GM12878 (cell line): ENCODE measurements at regions of chr1 and their contacts with region 1.

Region 1: GRCh38 chr1:212928323-212929291 is 21.7 kb upstream of the VASH2 start:
- DNase-seq: peak; percentile 65
- ATAC-seq: peak; percentile 87
- H3K4me3 ChIP-seq: no peak overlapping the region
- H3K27ac ChIP-seq: peak overlapping the region; percentile 79
- H3K4me1 ChIP-seq: peaks cover 18% of the 10 kb centered on the region
- H3K27me3 ChIP-seq: no peaks in the 10 kb centered on the region
- CTCF ChIP-seq: no peak
- EP300 ChIP-seq: no peak
- POLR2A ChIP-seq: no peak
- RAD21 ChIP-seq: no peak

Region 2: GRCh38 chr1:212938846-212939245 is 10.2 kb after region 1 on chr1:
- CTCF ChIA-PET with region 1: interaction called, 13 read pairs
- POLR2A ChIA-PET with region 1: interaction called, 13 read pairs
- RAD21 ChIA-PET with region 1: interaction called, 5 read pairs
- SMC1A ChIA-PET with region 1: interaction called, 13 read pairs
- in situ Hi-C with region 1: no loop called
- intact Hi-C with region 1: no loop called
- DNase-seq: no peak
- ATAC-seq: no peak
- H3K4me3 ChIP-seq: no peak overlapping the region
- H3K27ac ChIP-seq: no peak overlapping the region
- H3K4me1 ChIP-seq: peaks cover 8% of the 10 kb centered on the region
- H3K27me3 ChIP-seq: no peaks in the 10 kb centered on the region
- CTCF ChIP-seq: no peak
- EP300 ChIP-seq: no peak
- POLR2A ChIP-seq: no peak
- RAD21 ChIP-seq: no peak